ENCODE measurements at regions of chr1 and their contacts with region 1.

Region 1: DNA sequence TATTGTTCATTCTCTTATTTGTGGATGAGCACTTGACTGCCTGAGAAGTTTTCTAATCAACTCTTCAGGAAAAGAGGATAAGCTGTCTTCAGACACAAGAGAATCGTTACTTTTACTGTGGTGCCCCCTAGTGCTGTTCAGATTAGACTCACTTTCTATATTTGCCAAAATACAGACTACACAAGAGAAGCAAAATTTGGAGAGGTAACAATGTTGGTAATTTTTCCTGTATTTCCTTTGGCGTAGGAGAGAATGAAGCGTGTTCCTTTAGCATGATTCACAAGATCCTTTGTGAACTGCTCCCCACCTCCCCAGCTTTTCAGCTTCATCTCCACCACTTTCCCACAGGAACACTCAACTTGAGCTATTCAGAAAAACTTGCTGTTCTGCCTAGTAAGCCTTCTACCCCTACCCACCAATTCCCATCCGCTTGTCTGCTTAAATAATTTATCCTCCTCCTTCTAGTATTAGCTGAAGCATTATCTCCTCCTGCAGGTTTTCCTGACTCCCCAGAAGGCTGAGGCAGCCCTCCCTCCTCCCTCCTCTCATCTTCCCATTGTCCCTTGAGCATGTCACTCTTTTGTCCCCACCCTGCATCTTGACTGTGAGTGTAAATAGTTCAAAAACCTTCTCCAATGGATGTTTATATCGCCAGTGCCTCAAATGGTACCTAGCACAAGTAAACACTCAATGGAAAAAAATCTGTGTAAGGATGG is 4.5 kb downstream of the TNFSF4 start:
- DNase-seq: peak; percentile 98
- ATAC-seq: peak; percentile 93
- H3K4me3 ChIP-seq: no peak overlapping the region
- H3K27ac ChIP-seq: no peak overlapping the region
- H3K4me1 ChIP-seq: 0 out of 2 replicates have a peak, but pooled peaks cover 4% of the 10 kb centered on the region
- H3K27me3 ChIP-seq: no peaks in the 10 kb centered on the region
- CTCF ChIP-seq: peak; percentile 100

Region 2: GRCh38 chr1:172906778-172907592 is 295.6 kb before region 1 on chr1:
- CTCF ChIA-PET with region 1: interaction called, 4 read pairs
- POLR2A ChIA-PET with region 1: no interaction called
- intact Hi-C with region 1: loop called (anchors 1 kb)
- DNase-seq: peak; percentile 99
- ATAC-seq: peak; percentile 25
- H3K4me3 ChIP-seq: no peak overlapping the region; the same call in 1 of the 2 replicates
- H3K27ac ChIP-seq: peak overlapping the region; percentile 77
- H3K4me1 ChIP-seq: peaks cover 64% of the 10 kb centered on the region
- H3K27me3 ChIP-seq: no peaks in the 10 kb centered on the region
- CTCF ChIP-seq: no peak

Region 3: GRCh38 chr1:172935062-172935592 is 267.5 kb before region 1 on chr1:
- CTCF ChIA-PET with region 1: no interaction called
- POLR2A ChIA-PET with region 1: no interaction called
- intact Hi-C with region 1: loop called (anchors 1 kb)
- DNase-seq: no peak
- ATAC-seq: no peak
- H3K4me3 ChIP-seq: no peak overlapping the region
- H3K27ac ChIP-seq: peak overlapping the region; percentile 70
- H3K4me1 ChIP-seq: peaks cover 34% of the 10 kb centered on the region
- H3K27me3 ChIP-seq: no peaks in the 10 kb centered on the region
- CTCF ChIP-seq: no peak

Region 4: GRCh38 chr1:173043253-173043652 is 159.3 kb before region 1 on chr1:
- CTCF ChIA-PET with region 1: interaction called, 5 read pairs
- POLR2A ChIA-PET with region 1: no interaction called
- intact Hi-C with region 1: loop called (anchors 1 kb)
- DNase-seq: peak; percentile 99
- ATAC-seq: peak; percentile 99
- H3K4me3 ChIP-seq: peak overlapping the region; percentile 1; the same call in 1 of the 2 replicates
- H3K27ac ChIP-seq: peak overlapping the region; percentile 33
- H3K4me1 ChIP-seq: peaks cover 27% of the 10 kb centered on the region
- H3K27me3 ChIP-seq: no peaks in the 10 kb centered on the region
- CTCF ChIP-seq: no peak

Region 5: GRCh38 chr1:173255214-173255813 is 52.7 kb after region 1 on chr1:
- CTCF ChIA-PET with region 1: no interaction called
- POLR2A ChIA-PET with region 1: no interaction called
- intact Hi-C with region 1: no loop called
- DNase-seq: peak; percentile 90
- ATAC-seq: peak; percentile 90
- H3K4me3 ChIP-seq: no peak overlapping the region
- H3K27ac ChIP-seq: no peak overlapping the region
- H3K4me1 ChIP-seq: no peaks in the 10 kb centered on the region
- H3K27me3 ChIP-seq: no peaks in the 10 kb centered on the region
- CTCF ChIP-seq: peak; percentile 100

Region 6: DNA sequence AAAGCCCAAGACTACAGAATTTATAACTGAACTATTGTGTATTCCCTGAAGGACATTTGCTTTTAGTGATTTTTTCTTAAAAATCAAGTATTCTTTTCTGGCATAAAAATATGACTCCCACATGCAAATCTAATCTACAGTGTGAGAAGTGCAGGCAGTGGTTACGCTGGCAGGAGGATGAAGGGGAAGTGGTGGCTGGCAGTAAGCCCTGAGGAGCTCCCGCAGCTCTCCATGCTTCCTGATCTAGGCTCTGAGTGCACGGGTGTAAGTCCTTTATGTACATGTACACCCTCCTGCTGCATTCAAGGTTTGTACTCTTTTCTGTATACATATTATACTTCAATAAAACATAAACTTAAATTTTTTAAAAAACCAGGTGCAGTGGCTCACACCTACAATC is 207.0 kb after region 1 on chr1:
- CTCF ChIA-PET with region 1: interaction called, 4 read pairs
- POLR2A ChIA-PET with region 1: no interaction called
- intact Hi-C with region 1: loop called (anchors 5 kb)
- DNase-seq: peak; percentile 94
- ATAC-seq: peak; percentile 72
- H3K4me3 ChIP-seq: no peak overlapping the region
- H3K27ac ChIP-seq: peak overlapping the region; percentile 9; the same call in 1 of the 2 replicates
- H3K4me1 ChIP-seq: peaks cover 49% of the 10 kb centered on the region
- H3K27me3 ChIP-seq: no peaks in the 10 kb centered on the region
- CTCF ChIP-seq: no peak

Measured in PC-3 (cell line).